ENCODE measurements at regions of chr17 and their contacts with region 1.

Region 1: DNA sequence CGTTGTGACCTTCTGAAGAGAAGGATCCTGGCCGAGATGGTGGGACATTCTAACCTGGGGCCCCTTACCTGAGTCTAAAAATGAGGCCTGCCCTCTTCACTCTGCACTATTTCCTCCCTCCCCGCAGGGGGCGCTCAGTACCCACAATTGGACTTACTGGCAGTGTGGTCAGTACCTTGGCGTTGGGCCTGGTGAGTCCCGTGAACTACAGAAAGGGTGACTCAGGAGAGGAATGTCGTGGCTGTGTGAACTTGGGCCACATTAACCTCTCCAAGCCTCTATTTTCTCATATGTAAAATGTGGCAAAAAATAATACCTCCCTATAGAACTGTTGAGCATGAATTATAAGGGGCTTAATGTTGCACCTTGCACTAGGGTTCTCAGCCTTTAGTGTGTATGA is 3.9 kb downstream of the RSAD1 start:
- DNase-seq: peak; percentile 98
- H3K4me3 ChIP-seq: no peak overlapping the region
- H3K27ac ChIP-seq: peak overlapping the region; percentile 79 to 82 (median 81)
- H3K4me1 ChIP-seq: peaks cover 35 to 42% (median 37%) of the 10 kb centered on the region in 4 donors
- H3K27me3 ChIP-seq: peaks cover 0 to under 1% (median 0%) of the 10 kb centered on the region in 4 donors
- CTCF ChIP-seq: peak; percentile 89 to 97 (median 93)
- EP300 ChIP-seq: no peak
- POLR2A ChIP-seq: no peak

Region 2: GRCh38 chr17:50541716-50542688 is 59.5 kb after region 1 on chr17:
- intact Hi-C with region 1: loop called (anchors 2 kb)
- DNase-seq: peak; percentile 95
- H3K4me3 ChIP-seq: peak overlapping the region; percentile 60 to 77 (median 68)
- H3K27ac ChIP-seq: peak overlapping the region; percentile 64 to 78 (median 68)
- H3K4me1 ChIP-seq: peaks cover 22 to 30% (median 26%) of the 10 kb centered on the region in 4 donors
- H3K27me3 ChIP-seq: no peaks in the 10 kb centered on the region
- CTCF ChIP-seq: peak in 2 of 3 experiments; percentile 23 to 29
- EP300 ChIP-seq: no peak
- POLR2A ChIP-seq: no peak

Region 3: GRCh38 chr17:50559674-50560184 is 77.2 kb after region 1 on chr17:
- intact Hi-C with region 1: no loop called
- DNase-seq: no peak
- H3K4me3 ChIP-seq: peak overlapping the region; percentile 58 to 73 (median 62)
- H3K27ac ChIP-seq: no peak overlapping the region
- H3K4me1 ChIP-seq: peaks cover 41 to 55% (median 50%) of the 10 kb centered on the region in 4 donors
- H3K27me3 ChIP-seq: peaks cover 3 to 95% (median 50%) of the 10 kb centered on the region in 4 donors
- CTCF ChIP-seq: no peak
- EP300 ChIP-seq: no peak
- POLR2A ChIP-seq: no peak

Region 4: DNA sequence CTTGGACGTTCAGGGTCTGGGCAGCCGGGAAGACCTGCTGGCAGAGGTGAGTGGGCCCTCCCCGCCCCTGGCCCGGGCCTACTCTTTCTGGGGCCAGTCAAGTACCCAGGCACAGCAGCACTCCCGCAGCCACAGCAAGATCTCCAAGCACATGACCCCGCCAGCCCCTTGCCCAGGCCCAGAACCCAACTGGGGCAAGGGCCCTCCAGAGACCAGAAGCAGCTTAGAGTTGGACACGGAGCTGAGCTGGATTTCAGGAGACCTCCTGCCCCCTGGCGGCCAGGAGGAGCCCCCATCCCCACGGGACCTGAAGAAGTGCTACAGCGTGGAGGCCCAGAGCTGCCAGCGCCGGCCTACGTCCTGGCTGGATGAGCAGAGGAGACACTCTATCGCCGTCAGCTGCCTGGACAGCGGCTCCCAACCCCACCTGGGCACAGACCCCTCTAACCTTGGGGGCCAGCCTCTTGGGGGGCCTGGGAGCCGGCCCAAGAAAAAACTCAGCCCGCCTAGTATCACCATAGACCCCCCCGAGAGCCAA is 143.6 kb after region 1 on chr17:
- intact Hi-C with region 1: loop called (anchors 5 kb)
- DNase-seq: no peak
- H3K4me3 ChIP-seq: no peak overlapping the region
- H3K27ac ChIP-seq: no peak overlapping the region
- H3K4me1 ChIP-seq: peaks cover 0 to 11% (median 8%) of the 10 kb centered on the region in 4 donors
- H3K27me3 ChIP-seq: peaks cover 0 to 67% (median 5%) of the 10 kb centered on the region in 4 donors
- CTCF ChIP-seq: peak; percentile 67 to 69 (median 69)
- EP300 ChIP-seq: no peak
- POLR2A ChIP-seq: no peak

Region 5: GRCh38 chr17:50697663-50698274 is 215.3 kb after region 1 on chr17:
- intact Hi-C with region 1: loop called (anchors 5 kb)
- DNase-seq: no peak
- H3K4me3 ChIP-seq: no peak overlapping the region
- H3K27ac ChIP-seq: no peak overlapping the region
- H3K4me1 ChIP-seq: peaks cover 14 to 52% (median 45%) of the 10 kb centered on the region in 4 donors
- H3K27me3 ChIP-seq: no peaks in the 10 kb centered on the region
- CTCF ChIP-seq: no peak
- EP300 ChIP-seq: no peak
- POLR2A ChIP-seq: no peak

Region 6: DNA sequence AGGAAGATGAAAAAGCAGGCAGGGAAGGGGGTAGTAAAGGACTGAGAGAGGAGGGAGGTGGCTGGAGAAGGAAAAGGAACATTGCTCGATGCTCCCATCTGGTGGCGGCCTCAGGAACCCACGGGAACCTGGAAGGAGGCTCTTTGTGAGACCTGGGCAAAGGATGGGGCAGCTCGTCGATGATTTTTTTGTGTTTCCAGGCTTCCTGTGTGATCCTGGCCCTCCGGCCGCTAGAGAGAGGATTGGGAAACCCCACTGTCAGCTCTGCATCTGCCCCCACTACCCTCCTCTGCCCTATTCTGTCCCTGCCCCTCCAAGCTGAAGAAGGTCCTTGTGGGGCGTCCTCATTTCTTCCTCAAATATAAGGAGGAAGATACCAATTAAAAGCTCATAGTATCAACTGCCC is 359.4 kb after region 1 on chr17:
- intact Hi-C with region 1: loop called (anchors 10 kb)
- DNase-seq: no peak
- H3K4me3 ChIP-seq: no peak overlapping the region
- H3K27ac ChIP-seq: no peak overlapping the region
- H3K4me1 ChIP-seq: peaks cover 0 to 8% (median 7%) of the 10 kb centered on the region in 4 donors
- H3K27me3 ChIP-seq: no peaks in the 10 kb centered on the region
- CTCF ChIP-seq: peak; percentile 81 to 86 (median 85)
- EP300 ChIP-seq: no peak
- POLR2A ChIP-seq: no peak

Measured in esophagus muscularis mucosa (tissue), 4 donors.